ENCODE measurements at regions of chr3 and their contacts with region 1.

Region 1: GRCh38 chr3:81218023-81218422 is 543.4 kb downstream of the GBE1 start:
- DNase-seq: peak; percentile 46 to 60
- H3K4me3 ChIP-seq: no peak overlapping the region
- H3K4me3 Mint-ChIP-seq: no peak overlapping the region
- H3K27ac Mint-ChIP-seq: no peak overlapping the region
- H3K4me1 ChIP-seq: peaks cover 12% of the 10 kb centered on the region
- H3K4me1 Mint-ChIP-seq: peaks cover 14% of the 10 kb centered on the region
- H3K27me3 ChIP-seq: no peaks in the 10 kb centered on the region
- H3K27me3 Mint-ChIP-seq: no peaks in the 10 kb centered on the region
- CTCF ChIP-seq: peak; percentile 48 to 87

Region 2: GRCh38 chr3:80785470-80785869 is 432.6 kb before region 1 on chr3:
- CTCF ChIA-PET with region 1: no interaction called
- POLR2A ChIA-PET with region 1: no interaction called
- intact Hi-C with region 1: loop called (anchors 2 kb)
- DNase-seq: peak; percentile 40 to 41
- H3K4me3 ChIP-seq: no peak overlapping the region
- H3K4me3 Mint-ChIP-seq: no peak overlapping the region
- H3K27ac Mint-ChIP-seq: no peak overlapping the region
- H3K4me1 ChIP-seq: no peaks in the 10 kb centered on the region
- H3K4me1 Mint-ChIP-seq: no peaks in the 10 kb centered on the region
- H3K27me3 ChIP-seq: no peaks in the 10 kb centered on the region
- H3K27me3 Mint-ChIP-seq: no peaks in the 10 kb centered on the region
- CTCF ChIP-seq: peak; percentile 51 to 64

Region 3: GRCh38 chr3:81242871-81243270 is 24.8 kb after region 1 on chr3:
- CTCF ChIA-PET with region 1: interaction called, 3 read pairs
- POLR2A ChIA-PET with region 1: no interaction called
- intact Hi-C with region 1: loop called (anchors 1 kb)
- DNase-seq: no peak
- H3K4me3 ChIP-seq: no peak overlapping the region
- H3K4me3 Mint-ChIP-seq: no peak overlapping the region
- H3K27ac Mint-ChIP-seq: no peak overlapping the region
- H3K4me1 ChIP-seq: peaks cover 15% of the 10 kb centered on the region
- H3K4me1 Mint-ChIP-seq: no peaks in the 10 kb centered on the region
- H3K27me3 ChIP-seq: no peaks in the 10 kb centered on the region
- H3K27me3 Mint-ChIP-seq: no peaks in the 10 kb centered on the region
- CTCF ChIP-seq: peak; percentile 35 to 40

Region 4: GRCh38 chr3:81338676-81339555 is 120.9 kb after region 1 on chr3:
- CTCF ChIA-PET with region 1: no interaction called
- POLR2A ChIA-PET with region 1: no interaction called
- intact Hi-C with region 1: loop called (anchors 1 kb)
- DNase-seq: peak in 1 of 2 experiments; percentile 24
- H3K4me3 ChIP-seq: no peak overlapping the region
- H3K4me3 Mint-ChIP-seq: no peak overlapping the region
- H3K27ac Mint-ChIP-seq: no peak overlapping the region
- H3K4me1 ChIP-seq: peaks cover 11% of the 10 kb centered on the region
- H3K4me1 Mint-ChIP-seq: peaks cover 7% of the 10 kb centered on the region
- H3K27me3 ChIP-seq: no peaks in the 10 kb centered on the region
- H3K27me3 Mint-ChIP-seq: no peaks in the 10 kb centered on the region
- CTCF ChIP-seq: peak; percentile 49 to 65

Region 5: DNA sequence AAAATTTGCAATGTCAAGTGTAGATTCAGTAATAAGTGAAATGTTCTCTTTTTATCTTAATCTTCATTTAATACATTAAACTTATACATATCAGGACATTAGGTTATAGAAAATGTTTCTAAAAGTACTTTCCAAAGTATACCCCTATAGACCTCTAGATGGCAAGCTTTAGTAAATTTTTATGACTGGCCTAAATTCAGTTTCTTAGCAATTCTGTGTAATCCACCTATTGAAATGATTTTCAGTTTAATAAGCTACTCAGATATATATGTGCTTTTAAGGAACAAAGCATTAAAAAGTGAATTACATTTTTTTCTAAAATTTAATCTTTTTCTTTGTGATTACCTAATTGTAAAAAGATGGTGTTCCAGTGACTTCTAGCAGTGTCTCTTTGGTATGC is 201.2 kb after region 1 on chr3:
- CTCF ChIA-PET with region 1: no interaction called
- POLR2A ChIA-PET with region 1: no interaction called
- intact Hi-C with region 1: loop called (anchors 2 kb)
- DNase-seq: no peak
- H3K4me3 ChIP-seq: no peak overlapping the region
- H3K4me3 Mint-ChIP-seq: no peak overlapping the region
- H3K27ac Mint-ChIP-seq: no peak overlapping the region
- H3K4me1 ChIP-seq: no peaks in the 10 kb centered on the region
- H3K4me1 Mint-ChIP-seq: no peaks in the 10 kb centered on the region
- H3K27me3 ChIP-seq: no peaks in the 10 kb centered on the region
- H3K27me3 Mint-ChIP-seq: no peaks in the 10 kb centered on the region
- CTCF ChIP-seq: peak in 1 of 2 experiments; percentile 41

Region 6: DNA sequence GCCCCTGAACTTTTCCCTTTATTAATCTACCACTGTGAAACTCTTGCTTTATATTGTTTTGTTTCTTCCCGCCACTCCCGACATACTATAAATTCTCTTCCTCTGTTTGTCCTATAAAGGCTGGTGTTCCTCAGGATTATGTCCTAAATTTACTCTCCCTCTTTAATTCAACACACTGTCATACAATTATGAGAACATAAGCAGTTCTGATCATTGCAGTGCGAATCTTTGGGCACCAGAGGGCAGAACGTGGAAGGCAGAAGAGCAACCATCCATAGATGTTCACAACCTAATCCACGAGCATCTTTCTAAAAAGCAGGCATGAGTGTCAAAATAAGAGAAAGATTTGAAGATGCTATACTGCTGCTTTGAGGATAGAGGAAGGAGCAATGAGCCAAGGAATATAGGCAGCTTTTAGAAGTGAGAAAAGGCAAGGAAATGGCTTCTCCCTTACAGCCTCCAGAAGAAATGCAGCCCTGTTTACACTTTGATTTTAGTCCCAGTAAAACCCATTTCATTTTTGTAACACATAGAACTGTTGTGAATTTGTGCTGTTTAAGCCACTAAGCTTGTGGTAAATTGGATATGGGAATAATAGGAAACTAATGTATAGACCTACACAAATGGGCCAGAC is 364.1 kb after region 1 on chr3:
- CTCF ChIA-PET with region 1: no interaction called
- POLR2A ChIA-PET with region 1: no interaction called
- intact Hi-C with region 1: loop called (anchors 1 kb)
- DNase-seq: peak; percentile 33 to 51
- H3K4me3 ChIP-seq: no peak overlapping the region
- H3K4me3 Mint-ChIP-seq: no peak overlapping the region
- H3K27ac Mint-ChIP-seq: no peak overlapping the region
- H3K4me1 ChIP-seq: no peaks in the 10 kb centered on the region
- H3K4me1 Mint-ChIP-seq: peaks cover 7% of the 10 kb centered on the region
- H3K27me3 ChIP-seq: no peaks in the 10 kb centered on the region
- H3K27me3 Mint-ChIP-seq: no peaks in the 10 kb centered on the region
- CTCF ChIP-seq: peak; percentile 54 to 79

Region 7: GRCh38 chr3:81643721-81644120 is 425.7 kb after region 1 on chr3:
- CTCF ChIA-PET with region 1: no interaction called
- POLR2A ChIA-PET with region 1: no interaction called
- intact Hi-C with region 1: loop called (anchors 1 kb)
- DNase-seq: peak; percentile 28 to 33
- H3K4me3 ChIP-seq: no peak overlapping the region
- H3K4me3 Mint-ChIP-seq: no peak overlapping the region
- H3K27ac Mint-ChIP-seq: no peak overlapping the region
- H3K4me1 ChIP-seq: no peaks in the 10 kb centered on the region
- H3K4me1 Mint-ChIP-seq: no peaks in the 10 kb centered on the region
- H3K27me3 ChIP-seq: no peaks in the 10 kb centered on the region
- H3K27me3 Mint-ChIP-seq: no peaks in the 10 kb centered on the region
- CTCF ChIP-seq: peak; percentile 37 to 39